BJ (cell line): ENCODE measurements at regions of chr21 and their contacts with region 1.

Region 1: GRCh38 chr21:29002442-29003144 is 9.9 kb upstream of the LTN1 start:
- DNase-seq: peak; percentile 84
- H3K4me3 ChIP-seq: peak overlapping the region; percentile 70
- H3K27me3 ChIP-seq: no peaks in the 10 kb centered on the region
- CTCF ChIP-seq: no peak

Region 2: DNA sequence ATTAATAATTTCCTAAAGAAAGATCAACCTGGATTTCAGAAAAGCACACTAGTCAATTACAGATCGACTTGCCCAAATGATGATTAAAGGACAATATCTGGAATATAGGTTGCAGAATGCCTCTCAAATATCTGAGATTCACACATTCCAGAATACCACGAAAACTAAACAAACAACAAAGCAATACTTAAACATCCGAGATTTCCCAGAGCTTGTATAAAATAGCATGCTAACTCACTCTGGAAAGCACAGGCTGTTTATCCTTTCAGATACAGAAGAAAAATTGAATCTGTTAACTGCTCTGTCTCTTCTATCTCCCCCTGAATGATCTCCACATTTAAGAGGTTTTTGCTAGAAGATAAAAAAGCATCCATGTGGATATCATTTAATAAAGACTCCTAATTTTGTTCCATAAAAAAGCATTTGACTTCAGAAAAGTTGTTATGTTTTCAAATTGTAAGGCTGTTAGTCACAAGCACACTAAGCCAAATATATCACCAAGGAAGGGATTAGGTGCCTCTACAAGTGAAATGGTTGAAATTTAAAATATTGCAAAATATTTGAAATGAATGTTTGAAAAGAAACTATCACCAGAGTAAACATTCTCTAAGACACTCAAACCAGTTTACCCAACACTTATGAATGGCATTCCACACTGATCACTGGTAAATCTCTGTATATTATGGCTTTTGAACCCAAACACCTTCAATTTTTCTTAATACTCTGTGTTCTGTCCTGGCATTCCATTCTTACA is 1170.6 kb before region 1 on chr21:
- CTCF ChIA-PET with region 1: no interaction called
- POLR2A ChIA-PET with region 1: no interaction called
- DNase-seq: peak; percentile 19
- H3K4me3 ChIP-seq: no peak overlapping the region
- H3K27me3 ChIP-seq: no peaks in the 10 kb centered on the region
- CTCF ChIP-seq: no peak

Region 3: GRCh38 chr21:28357743-28358142 is 644.9 kb before region 1 on chr21:
- CTCF ChIA-PET with region 1: no interaction called
- POLR2A ChIA-PET with region 1: no interaction called
- DNase-seq: no peak
- H3K4me3 ChIP-seq: no peak overlapping the region
- H3K27me3 ChIP-seq: no peaks in the 10 kb centered on the region
- CTCF ChIP-seq: no peak

Region 4: GRCh38 chr21:28975397-28975796 is 27.2 kb before region 1 on chr21:
- CTCF ChIA-PET with region 1: interaction called, 5 read pairs
- POLR2A ChIA-PET with region 1: interaction called, 10 read pairs
- DNase-seq: peak; percentile 88
- H3K4me3 ChIP-seq: no peak overlapping the region
- H3K27me3 ChIP-seq: no peaks in the 10 kb centered on the region
- CTCF ChIP-seq: no peak

Region 5: DNA sequence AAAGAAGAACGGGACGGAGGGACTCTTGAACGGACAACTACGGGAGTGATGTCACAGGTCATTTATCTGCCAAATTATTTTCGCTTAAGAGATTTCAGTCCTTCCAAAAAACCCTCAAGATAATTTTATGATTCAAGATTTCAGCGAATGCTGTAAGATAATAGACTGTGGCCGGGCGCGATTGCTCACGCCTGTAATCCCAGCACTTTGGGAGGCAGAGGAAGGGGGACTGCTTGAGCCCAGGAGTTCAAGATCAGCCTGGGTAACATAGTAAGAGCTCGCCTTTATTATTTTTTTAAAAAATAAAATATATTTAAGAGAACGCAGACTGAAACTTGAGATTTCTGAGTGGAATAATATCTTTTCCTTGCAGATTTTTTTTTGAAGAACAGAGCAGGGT is 15.9 kb after region 1 on chr21:
- CTCF ChIA-PET with region 1: interaction called, 3 read pairs
- POLR2A ChIA-PET with region 1: interaction called, 10 read pairs
- DNase-seq: no peak
- H3K4me3 ChIP-seq: peak overlapping the region; percentile 76
- H3K27me3 ChIP-seq: no peaks in the 10 kb centered on the region
- CTCF ChIP-seq: no peak